ENCODE measurements at regions of chr1 and their contacts with region 1.

Region 1: DNA sequence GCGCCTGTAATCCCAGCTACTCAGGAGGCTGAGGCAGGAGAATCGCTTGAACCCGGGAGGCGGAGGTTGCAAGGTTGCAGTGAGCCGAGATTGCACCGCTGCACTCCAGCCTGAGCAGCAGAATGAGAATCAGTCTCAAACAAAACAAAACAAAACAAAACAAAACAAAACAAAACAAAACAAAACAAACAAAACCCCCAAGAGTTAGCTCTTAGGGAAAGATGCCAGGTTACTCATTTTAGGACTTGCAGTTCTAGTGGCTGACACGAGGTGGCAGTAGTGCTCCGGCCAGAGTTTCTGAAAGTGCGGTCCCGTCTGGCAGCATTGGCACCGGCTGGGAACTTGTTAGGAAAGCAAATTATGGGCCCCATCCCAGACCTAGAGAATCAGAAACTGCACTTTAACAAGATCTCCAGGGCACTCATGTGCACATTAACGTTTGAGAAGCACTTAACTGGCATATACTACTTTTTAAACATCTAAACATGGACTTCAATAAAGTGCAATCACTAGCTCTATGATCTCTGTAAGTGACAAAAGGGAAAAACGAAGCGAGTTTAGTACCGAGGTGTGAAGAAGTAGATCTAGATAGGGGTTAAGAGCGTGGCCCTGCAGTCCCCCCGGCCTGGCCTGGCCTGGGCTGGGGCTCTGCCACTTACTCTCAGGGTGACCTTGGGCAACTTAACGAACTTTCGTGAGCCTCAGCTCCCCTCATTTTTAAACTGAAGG is 41.9 kb upstream of the TNFRSF1B start:
- DNase-seq: peak; percentile 85
- ATAC-seq: peak; percentile 49
- H3K4me3 Mint-ChIP-seq: no peak overlapping the region
- H3K27ac Mint-ChIP-seq: peak overlapping the region; percentile 73
- H3K4me1 Mint-ChIP-seq: peaks cover 60% of the 10 kb centered on the region
- H3K27me3 Mint-ChIP-seq: peaks cover 8% of the 10 kb centered on the region
- CTCF ChIP-seq: peak; percentile 99

Region 2: DNA sequence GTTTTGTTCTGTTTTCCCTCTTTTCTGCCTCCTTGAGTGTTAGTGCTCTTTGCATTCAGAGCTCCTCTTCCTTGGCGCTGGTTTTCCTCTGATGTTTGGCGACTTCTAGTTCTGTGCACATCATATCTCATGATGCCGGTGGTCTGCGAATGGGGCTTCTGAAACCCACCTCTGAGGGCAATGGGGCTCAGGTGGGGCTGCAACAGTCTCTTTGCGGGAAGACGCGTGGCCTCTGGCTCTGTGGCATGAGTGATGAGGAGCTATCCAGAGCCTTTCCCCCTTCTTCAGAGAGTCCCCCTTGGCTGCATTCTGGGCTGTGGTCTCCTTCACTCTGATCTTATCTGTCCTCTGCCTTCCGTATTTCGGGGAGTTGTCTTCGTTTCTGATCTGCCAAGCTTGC is 22.8 kb before region 1 on chr1:
- CTCF ChIA-PET with region 1: interaction called, 18 read pairs
- POLR2A ChIA-PET with region 1: no interaction called
- intact Hi-C with region 1: no loop called
- DNase-seq: no peak
- ATAC-seq: no peak
- H3K4me3 Mint-ChIP-seq: no peak overlapping the region
- H3K27ac Mint-ChIP-seq: no peak overlapping the region
- H3K4me1 Mint-ChIP-seq: peaks cover 5% of the 10 kb centered on the region
- H3K27me3 Mint-ChIP-seq: no peaks in the 10 kb centered on the region
- CTCF ChIP-seq: no peak

Region 3: DNA sequence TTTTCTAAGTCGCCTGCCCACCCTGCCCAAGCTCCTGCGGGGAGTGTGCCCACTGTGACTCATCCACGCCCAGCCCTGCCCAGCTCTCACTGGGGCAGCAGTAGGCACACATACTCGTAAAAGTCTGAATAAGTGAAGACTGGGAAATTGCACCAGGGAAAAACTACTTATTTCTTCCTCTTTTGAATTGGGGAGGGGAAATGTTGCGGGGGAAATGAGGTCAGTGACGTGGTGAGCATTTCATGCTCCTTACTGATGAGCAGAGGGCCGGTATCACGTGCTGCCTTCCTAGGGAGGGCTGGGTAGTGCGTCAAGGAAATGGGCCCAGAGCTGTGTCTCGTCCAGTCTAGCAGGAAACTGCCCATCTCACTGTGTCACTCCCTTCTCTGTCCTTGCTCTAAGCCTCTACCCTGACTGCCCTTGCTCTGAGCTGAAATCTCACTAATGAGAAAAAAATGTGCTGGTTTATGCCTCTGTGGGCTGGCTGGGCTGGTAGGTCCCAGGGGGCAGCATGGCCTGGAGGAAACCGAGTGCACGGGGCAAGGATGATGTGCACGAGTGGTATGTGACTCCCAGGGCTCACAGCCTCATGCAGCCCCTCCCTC is 28.4 kb after region 1 on chr1:
- CTCF ChIA-PET with region 1: interaction called, 32 read pairs
- POLR2A ChIA-PET with region 1: interaction called, 4 read pairs
- intact Hi-C with region 1: no loop called
- DNase-seq: peak; percentile 32
- ATAC-seq: peak; percentile 3
- H3K4me3 Mint-ChIP-seq: no peak overlapping the region
- H3K27ac Mint-ChIP-seq: peak overlapping the region; percentile 25
- H3K4me1 Mint-ChIP-seq: peaks cover 89% of the 10 kb centered on the region
- H3K27me3 Mint-ChIP-seq: no peaks in the 10 kb centered on the region
- CTCF ChIP-seq: no peak

Region 4: GRCh38 chr1:12177999-12178441 is 53.2 kb after region 1 on chr1:
- CTCF ChIA-PET with region 1: interaction called, 98 read pairs
- POLR2A ChIA-PET with region 1: interaction called, 18 read pairs
- intact Hi-C with region 1: loop called (anchors 5 kb)
- DNase-seq: peak; percentile 99
- ATAC-seq: peak; percentile 72
- H3K4me3 Mint-ChIP-seq: peak overlapping the region; percentile 67
- H3K27ac Mint-ChIP-seq: peak overlapping the region; percentile 98
- H3K4me1 Mint-ChIP-seq: peaks cover 85% of the 10 kb centered on the region
- H3K27me3 Mint-ChIP-seq: no peaks in the 10 kb centered on the region
- CTCF ChIP-seq: no peak

Region 5: GRCh38 chr1:12208764-12209494 is 84.1 kb after region 1 on chr1:
- CTCF ChIA-PET with region 1: interaction called, 395 read pairs
- POLR2A ChIA-PET with region 1: interaction called, 51 read pairs
- intact Hi-C with region 1: loop called (anchors 1 kb)
- DNase-seq: peak; percentile 92
- ATAC-seq: peak; percentile 61
- H3K4me3 Mint-ChIP-seq: no peak overlapping the region
- H3K27ac Mint-ChIP-seq: peak overlapping the region; percentile 43
- H3K4me1 Mint-ChIP-seq: peaks cover 53% of the 10 kb centered on the region
- H3K27me3 Mint-ChIP-seq: no peaks in the 10 kb centered on the region
- CTCF ChIP-seq: peak; percentile 95

Region 6: DNA sequence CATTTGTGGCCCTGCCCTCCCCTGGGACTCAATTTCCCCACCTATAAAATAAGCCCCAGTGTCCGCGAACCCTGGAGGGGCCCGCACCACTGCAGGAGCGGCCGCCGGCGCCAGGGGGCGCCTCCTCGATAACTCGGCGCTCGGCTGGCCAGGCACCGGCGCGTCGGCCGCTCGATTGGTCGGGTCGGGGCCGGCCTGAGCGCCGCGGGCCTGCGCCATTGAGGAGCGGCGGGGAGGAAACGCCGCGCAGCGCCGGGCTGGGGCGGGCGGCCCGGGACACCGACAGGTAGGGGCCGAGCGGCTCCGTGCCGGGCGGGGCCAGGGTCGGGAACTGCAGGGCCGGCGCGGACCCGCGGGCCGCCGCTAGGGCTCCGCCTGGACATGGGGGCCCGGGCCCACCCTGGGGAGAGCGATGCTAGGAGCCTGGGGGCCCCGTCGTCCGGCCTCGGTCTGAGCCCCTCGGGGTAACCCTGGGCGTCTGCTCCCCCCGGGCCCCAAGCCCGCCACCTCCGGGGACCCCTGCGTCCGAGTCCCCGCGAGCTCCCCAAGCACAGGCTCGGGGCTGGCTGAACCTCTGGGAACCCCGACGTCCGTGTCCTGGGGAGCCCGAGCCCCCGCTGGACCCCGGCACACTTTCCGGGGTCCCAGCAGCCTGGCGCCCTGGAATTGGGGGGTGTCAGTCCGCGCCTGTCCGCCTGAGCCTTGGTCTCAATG is 105.1 kb after region 1 on chr1 and contains the start of gene VPS13D:
- CTCF ChIA-PET with region 1: interaction called, 50 read pairs
- POLR2A ChIA-PET with region 1: interaction called, 3 read pairs
- intact Hi-C with region 1: no loop called
- DNase-seq: peak; percentile 89
- ATAC-seq: peak; percentile 96
- H3K4me3 Mint-ChIP-seq: peak within 1 kb of the TSS; percentile 83
- H3K27ac Mint-ChIP-seq: peak within 1 kb of the TSS; percentile 70
- H3K4me1 Mint-ChIP-seq: peaks cover 18% of the 10 kb centered on the region
- H3K27me3 Mint-ChIP-seq: no peaks in the 10 kb centered on the region
- CTCF ChIP-seq: peak; percentile 94
- total RNA-seq, gene VPS13D: 28.1 to 30.7 TPM

Region 7: GRCh38 chr1:12296623-12297022 is 171.8 kb after region 1 on chr1:
- CTCF ChIA-PET with region 1: interaction called, 10 read pairs
- POLR2A ChIA-PET with region 1: no interaction called
- intact Hi-C with region 1: no loop called
- DNase-seq: no peak
- ATAC-seq: peak; percentile 88
- H3K4me3 Mint-ChIP-seq: no peak overlapping the region
- H3K27ac Mint-ChIP-seq: peak overlapping the region; percentile 74
- H3K4me1 Mint-ChIP-seq: peaks cover 33% of the 10 kb centered on the region
- H3K27me3 Mint-ChIP-seq: no peaks in the 10 kb centered on the region
- CTCF ChIP-seq: no peak

Measured in activated CD8-positive, alpha-beta T cell treated with anti-CD3 and anti-CD28 coated beads for 36 hours (primary cell).